ENCODE measurements at regions of chr11 and their contacts with region 1.

Region 1: DNA sequence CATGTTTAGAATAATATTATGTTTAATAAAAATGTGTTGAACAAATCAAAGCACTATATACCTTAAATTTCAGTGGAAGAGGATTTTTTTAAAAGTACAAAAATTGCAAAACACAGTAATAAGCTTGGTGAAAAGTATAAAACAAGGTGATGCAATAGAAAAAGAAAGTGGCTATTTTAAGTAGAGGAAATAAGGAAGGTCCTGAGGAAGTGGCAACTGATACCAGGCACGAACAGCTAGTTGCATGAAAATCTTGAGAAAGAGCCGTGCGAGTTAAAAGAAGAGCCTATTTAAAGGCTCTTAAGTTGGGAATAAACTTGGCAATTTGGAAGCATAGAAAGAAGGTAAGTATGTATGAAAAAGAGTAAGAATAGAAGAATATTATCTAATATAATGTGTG is 1679.3 kb downstream of the LRRC4C start:
- DNase-seq: no peak
- H3K4me3 ChIP-seq: no peak overlapping the region
- H3K27ac ChIP-seq: no peak overlapping the region
- H3K4me1 ChIP-seq: no peaks in the 10 kb centered on the region
- H3K27me3 ChIP-seq: no peaks in the 10 kb centered on the region
- CTCF ChIP-seq: no peak
- EP300 ChIP-seq: no peak
- POLR2A ChIP-seq: no peak

Region 2: GRCh38 chr11:39434466-39434865 is 345.7 kb before region 1 on chr11:
- in situ Hi-C with region 1: no loop called
- intact Hi-C with region 1: no loop called
- DNase-seq: no peak
- H3K4me3 ChIP-seq: no peak overlapping the region
- H3K27ac ChIP-seq: no peak overlapping the region
- H3K4me1 ChIP-seq: no peaks in the 10 kb centered on the region
- H3K27me3 ChIP-seq: no peaks in the 10 kb centered on the region
- CTCF ChIP-seq: no peak
- EP300 ChIP-seq: no peak
- POLR2A ChIP-seq: no peak

Region 3: DNA sequence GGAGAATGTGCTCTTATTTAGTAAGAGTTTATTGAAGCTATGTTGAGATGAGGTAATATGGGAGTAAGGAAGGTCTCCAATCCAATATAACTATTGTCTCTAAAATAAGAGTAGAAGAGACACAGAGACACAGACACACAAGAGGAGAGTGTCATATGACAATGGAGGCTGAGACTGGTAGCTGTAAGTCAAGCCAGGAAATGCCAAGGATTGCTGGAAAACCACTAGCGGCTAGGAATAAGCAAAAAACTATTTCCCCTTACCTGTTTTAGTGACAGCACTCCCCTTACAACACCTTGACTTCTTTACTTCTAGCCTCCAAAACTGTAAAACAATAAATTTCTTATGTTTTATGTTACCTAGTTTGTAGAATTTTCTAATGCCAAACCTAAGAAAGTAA is 26.5 kb after region 1 on chr11:
- in situ Hi-C with region 1: no loop called
- intact Hi-C with region 1: loop called (anchors 1 kb)
- DNase-seq: no peak
- H3K4me3 ChIP-seq: no peak overlapping the region
- H3K27ac ChIP-seq: no peak overlapping the region
- H3K4me1 ChIP-seq: no peaks in the 10 kb centered on the region
- H3K27me3 ChIP-seq: no peaks in the 10 kb centered on the region
- CTCF ChIP-seq: no peak
- EP300 ChIP-seq: no peak
- POLR2A ChIP-seq: no peak

Region 4: DNA sequence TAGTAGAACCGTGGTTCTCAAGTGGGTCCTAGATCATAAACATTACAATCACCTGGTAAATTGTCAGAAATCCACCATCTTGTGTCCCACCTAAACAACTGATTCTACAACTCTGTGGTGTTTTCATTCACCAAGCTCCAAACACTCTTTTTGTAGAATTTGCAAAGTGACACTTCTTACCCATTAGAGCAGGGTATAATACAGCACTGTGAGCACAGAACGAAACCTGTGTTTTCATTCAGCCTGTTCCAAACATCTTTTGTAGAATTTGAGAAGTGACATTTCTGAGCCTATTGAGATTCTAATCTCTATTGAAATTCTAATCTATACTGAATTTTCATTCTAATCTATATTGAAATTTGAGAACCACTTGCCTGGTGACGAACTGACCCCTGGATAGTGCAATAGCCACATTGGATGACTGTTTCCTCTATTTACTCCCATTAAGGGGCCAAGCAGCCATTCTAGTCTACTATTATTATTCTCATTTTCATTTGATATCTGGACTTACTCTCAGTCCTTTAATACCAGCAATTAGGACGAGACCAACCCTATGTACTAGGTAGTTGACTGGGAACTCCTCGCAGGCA is 1062.7 kb after region 1 on chr11:
- in situ Hi-C with region 1: no loop called
- intact Hi-C with region 1: loop called (anchors 5 kb)
- DNase-seq: no peak
- H3K4me3 ChIP-seq: no peak overlapping the region
- H3K27ac ChIP-seq: no peak overlapping the region
- H3K4me1 ChIP-seq: no peaks in the 10 kb centered on the region
- H3K27me3 ChIP-seq: no peaks in the 10 kb centered on the region
- CTCF ChIP-seq: no peak
- EP300 ChIP-seq: no peak
- POLR2A ChIP-seq: no peak

Measured in transverse colon (tissue), 4 donors.